ENCODE measurements at regions of chr7 and their contacts with region 1.

Region 1: DNA sequence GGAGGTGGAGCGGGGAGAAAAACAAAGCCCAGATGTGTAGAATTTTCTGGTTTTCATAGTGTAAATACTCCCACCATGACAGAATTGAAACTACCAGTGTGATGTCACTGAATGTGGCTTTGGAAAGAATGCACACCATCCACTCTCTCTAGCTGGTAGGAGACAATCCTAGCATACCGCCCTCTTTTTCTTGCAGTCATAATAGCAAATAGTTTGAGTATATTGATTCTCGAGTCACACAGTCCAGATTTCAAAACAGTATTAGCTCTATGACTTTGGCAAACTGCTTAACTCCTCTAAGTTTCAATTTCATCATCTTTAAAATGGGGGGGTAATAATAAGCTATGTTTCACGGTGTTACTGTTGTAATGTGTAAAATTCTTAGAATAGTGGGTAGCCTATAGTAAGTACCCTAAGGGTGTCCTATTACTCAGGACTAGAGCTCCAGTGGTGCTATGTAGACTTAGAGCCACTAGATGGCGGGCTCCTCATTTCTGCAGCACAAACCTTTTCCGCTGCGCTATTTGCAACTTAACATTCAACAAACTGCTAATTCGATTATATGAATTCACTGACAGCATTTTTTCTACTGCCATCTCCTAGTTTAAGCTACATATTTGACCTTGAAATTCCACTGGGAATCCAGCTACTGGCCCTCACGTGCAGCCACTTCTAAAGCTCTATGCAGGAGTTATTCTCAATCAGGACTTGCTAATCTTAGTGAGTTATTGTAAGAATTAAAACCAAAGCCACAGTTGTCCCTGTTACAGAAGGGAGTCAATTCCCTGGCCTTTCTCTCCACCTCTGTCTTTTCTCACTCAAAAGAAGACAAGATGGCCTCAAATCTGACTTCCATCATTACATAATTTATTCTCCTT is 18.7 kb downstream of the TAS2R40 start:
- DNase-seq: peak; percentile 68
- H3K4me3 ChIP-seq: peak overlapping the region; percentile 13 to 18; a peak in 2 of 4 replicates
- H3K27ac ChIP-seq: peak overlapping the region in 1 of 2 experiments; percentile 42; a peak in 2 of 4 replicates
- H3K4me1 ChIP-seq: peaks cover 0 to 7% of the 10 kb centered on the region in 2 experiments; a peak in 2 of 4 replicates
- H3K27me3 ChIP-seq: no peaks in the 10 kb centered on the region
- CTCF ChIP-seq: peak; percentile 100
- EP300 ChIP-seq: no peak
- RAD21 ChIP-seq: peak; percentile 95

Region 2: GRCh38 chr7:143188994-143189393 is 51.5 kb before region 1 on chr7:
- CTCF ChIA-PET with region 1: no interaction called
- POLR2A ChIA-PET with region 1: no interaction called
- DNase-seq: no peak
- H3K4me3 ChIP-seq: no peak overlapping the region
- H3K27ac ChIP-seq: no peak overlapping the region
- H3K4me1 ChIP-seq: no peaks in the 10 kb centered on the region
- H3K27me3 ChIP-seq: peaks cover 4% of the 10 kb centered on the region; the same call in 1 of the 2 replicates
- CTCF ChIP-seq: no peak
- EP300 ChIP-seq: no peak
- RAD21 ChIP-seq: no peak

Region 3: GRCh38 chr7:143222782-143223181 is 17.7 kb before region 1 on chr7:
- CTCF ChIA-PET with region 1: interaction called, 32 read pairs
- POLR2A ChIA-PET with region 1: no interaction called
- DNase-seq: no peak
- H3K4me3 ChIP-seq: no peak overlapping the region
- H3K27ac ChIP-seq: no peak overlapping the region
- H3K4me1 ChIP-seq: no peaks in the 10 kb centered on the region
- H3K27me3 ChIP-seq: peaks cover 40% of the 10 kb centered on the region; the same call in 1 of the 2 replicates
- CTCF ChIP-seq: no peak
- EP300 ChIP-seq: no peak
- RAD21 ChIP-seq: no peak

Region 4: DNA sequence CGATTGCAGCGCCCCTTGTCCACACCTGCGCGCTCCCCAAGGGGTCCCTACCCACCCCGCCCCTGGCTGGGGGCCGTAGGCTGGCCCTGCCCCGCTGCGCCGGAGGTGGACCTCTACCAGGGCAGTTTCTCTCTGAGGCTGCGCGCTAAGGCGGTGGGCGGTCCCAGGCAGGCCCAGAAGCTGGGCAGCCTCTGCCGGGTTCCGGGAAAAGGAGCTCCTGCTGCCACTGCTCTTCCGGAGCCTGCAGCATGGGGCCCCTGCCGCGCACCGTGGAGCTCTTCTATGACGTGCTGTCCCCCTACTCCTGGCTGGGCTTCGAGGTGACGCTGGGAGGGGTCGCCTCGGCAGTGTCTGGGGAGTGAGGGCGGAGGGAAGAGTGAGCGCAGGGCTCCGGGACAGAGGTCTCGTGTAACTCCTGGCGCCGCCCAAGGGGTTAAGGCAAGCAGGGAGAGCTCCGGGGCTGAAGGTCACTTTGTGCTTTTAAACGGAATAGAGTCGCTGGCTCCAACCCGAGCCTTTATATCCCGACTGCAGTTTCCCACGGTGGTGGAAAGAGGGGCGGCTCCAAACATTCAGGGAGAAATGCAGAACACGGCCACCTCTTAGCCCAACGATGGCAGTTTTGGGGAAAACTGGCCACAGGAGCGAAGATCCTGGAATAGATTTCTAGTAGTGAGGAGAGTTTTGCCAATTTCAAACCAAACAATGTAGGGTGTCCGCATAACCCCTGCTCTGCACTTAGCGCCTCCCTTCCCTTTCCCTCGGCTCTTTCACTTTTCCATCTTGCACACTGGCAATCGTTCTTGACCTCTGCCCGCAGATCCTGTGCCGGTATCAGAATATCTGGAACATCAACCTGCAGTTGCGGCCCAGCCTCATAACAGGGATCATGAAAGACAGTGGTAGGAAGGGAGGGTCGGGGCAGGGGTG is 23.0 kb after region 1 on chr7 and contains the start of gene GSTK1:
- CTCF ChIA-PET with region 1: interaction called, 17 read pairs
- POLR2A ChIA-PET with region 1: interaction called, 3 read pairs
- DNase-seq: peak; percentile 94
- H3K4me3 ChIP-seq: peak within 1 kb of the TSS; percentile 76 to 96
- H3K27ac ChIP-seq: peak within 1 kb of the TSS; percentile 54 to 79; a peak in 3 of 4 replicates
- H3K4me1 ChIP-seq: peaks cover 7 to 12% of the 10 kb centered on the region in 2 experiments; a peak in 2 of 4 replicates
- H3K27me3 ChIP-seq: no peaks in the 10 kb centered on the region
- CTCF ChIP-seq: 0 out of 2 replicates have a peak, but pooled peaks have one; percentile 8
- EP300 ChIP-seq: no peak
- RAD21 ChIP-seq: no peak
- polyA plus RNA-seq, gene GSTK1: 299 and 354 TPM in 2 replicates

Region 5: GRCh38 chr7:143299840-143300239 is 59.3 kb after region 1 on chr7:
- CTCF ChIA-PET with region 1: interaction called, 60 read pairs
- POLR2A ChIA-PET with region 1: no interaction called
- DNase-seq: peak; percentile 72
- H3K4me3 ChIP-seq: no peak overlapping the region
- H3K27ac ChIP-seq: peak overlapping the region in 1 of 2 experiments; percentile 1; a peak in 1 of 4 replicates
- H3K4me1 ChIP-seq: peaks cover 0 to 26% of the 10 kb centered on the region in 2 experiments; a peak in 3 of 4 replicates
- H3K27me3 ChIP-seq: no peaks in the 10 kb centered on the region
- CTCF ChIP-seq: peak; percentile 69
- EP300 ChIP-seq: no peak
- RAD21 ChIP-seq: peak; percentile 51

Region 6: GRCh38 chr7:143337216-143337615 is 96.7 kb after region 1 on chr7:
- CTCF ChIA-PET with region 1: interaction called, 13 read pairs
- POLR2A ChIA-PET with region 1: interaction called, 5 read pairs
- DNase-seq: no peak
- H3K4me3 ChIP-seq: no peak overlapping the region
- H3K27ac ChIP-seq: no peak overlapping the region
- H3K4me1 ChIP-seq: no peaks in the 10 kb centered on the region; a peak in 1 of 4 replicates
- H3K27me3 ChIP-seq: no peaks in the 10 kb centered on the region; the same call in 1 of the 2 replicates
- CTCF ChIP-seq: no peak
- EP300 ChIP-seq: no peak
- RAD21 ChIP-seq: no peak

Region 7: DNA sequence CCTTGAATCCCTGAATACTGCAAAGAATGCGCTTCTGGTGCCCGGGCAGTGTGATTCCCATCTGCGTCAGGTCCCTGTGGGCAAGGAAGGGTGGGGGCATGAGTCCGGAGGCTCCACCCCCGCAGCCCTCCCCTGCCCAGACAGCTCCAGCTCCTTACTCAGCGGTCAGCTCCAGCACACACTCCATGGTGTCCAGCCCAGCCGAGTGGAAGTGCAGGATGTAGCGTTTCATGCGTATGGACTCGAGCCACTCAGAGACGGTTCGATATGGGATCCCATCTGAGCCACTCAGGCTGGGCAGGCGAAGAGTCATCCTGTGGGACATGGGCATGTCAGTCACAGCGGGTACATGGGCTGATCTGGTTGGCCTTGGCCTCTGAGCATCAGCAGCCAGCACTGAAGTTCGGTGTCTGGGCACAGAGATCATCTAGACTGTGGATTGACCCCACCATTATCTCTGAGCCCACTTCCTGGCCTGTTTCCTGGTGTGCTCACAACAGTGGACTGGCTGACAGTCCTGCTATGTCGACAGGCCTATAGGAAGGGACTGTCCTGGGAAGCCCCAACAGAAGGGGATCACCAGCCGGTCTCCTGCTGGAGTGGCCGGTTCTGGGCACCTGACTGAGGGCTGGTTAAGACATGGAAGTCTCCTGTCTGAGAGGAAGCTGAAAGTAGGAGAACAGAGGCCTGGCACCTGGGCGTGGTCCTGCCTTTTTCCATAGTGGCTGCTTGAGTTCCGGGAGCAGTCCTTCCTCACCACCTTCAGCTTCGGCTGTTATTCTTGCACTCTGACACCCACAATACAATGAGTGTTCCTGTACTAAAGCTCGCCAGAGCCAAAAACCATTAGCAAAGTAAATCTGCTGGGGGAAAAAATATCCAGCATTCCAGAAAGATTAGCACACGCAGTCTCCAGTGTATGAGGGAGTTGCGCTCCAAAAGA is 151.2 kb after region 1 on chr7:
- CTCF ChIA-PET with region 1: interaction called, 12 read pairs
- POLR2A ChIA-PET with region 1: no interaction called
- DNase-seq: no peak
- H3K4me3 ChIP-seq: no peak overlapping the region
- H3K27ac ChIP-seq: peak overlapping the region; percentile 61 to 75
- H3K4me1 ChIP-seq: peaks cover 10 to 38% of the 10 kb centered on the region in 2 experiments; a peak in 3 of 4 replicates
- H3K27me3 ChIP-seq: no peaks in the 10 kb centered on the region
- CTCF ChIP-seq: no peak
- EP300 ChIP-seq: 0 out of 4 replicates have a peak, but pooled peaks of 1 of the 2 experiments have one; percentile 12
- RAD21 ChIP-seq: no peak